Endothelial cell of umbilical vein (primary cell): ENCODE measurements at regions of chr4 and their contacts with region 1.

Region 1: GRCh38 chr4:177108708-177109107 is 201.0 kb upstream of the NEIL3 start:
- DNase-seq: no peak
- H3K4me3 ChIP-seq: no peak overlapping the region
- H3K27ac ChIP-seq: no peak overlapping the region
- H3K4me1 ChIP-seq: no peaks in the 10 kb centered on the region
- H3K27me3 ChIP-seq: no peaks in the 10 kb centered on the region
- CTCF ChIP-seq: no peak
- POLR2A ChIP-seq: no peak

Region 2: GRCh38 chr4:176964116-176964691 is 144.5 kb before region 1 on chr4:
- CTCF ChIA-PET with region 1: no interaction called
- POLR2A ChIA-PET with region 1: no interaction called
- dilution Hi-C with region 1: no loop called
- intact Hi-C with region 1: no loop called
- DNase-seq: no peak
- H3K4me3 ChIP-seq: no peak overlapping the region
- H3K27ac ChIP-seq: no peak overlapping the region
- H3K4me1 ChIP-seq: no peaks in the 10 kb centered on the region
- H3K27me3 ChIP-seq: no peaks in the 10 kb centered on the region
- CTCF ChIP-seq: peak; percentile 12 to 16
- POLR2A ChIP-seq: no peak

Region 3: DNA sequence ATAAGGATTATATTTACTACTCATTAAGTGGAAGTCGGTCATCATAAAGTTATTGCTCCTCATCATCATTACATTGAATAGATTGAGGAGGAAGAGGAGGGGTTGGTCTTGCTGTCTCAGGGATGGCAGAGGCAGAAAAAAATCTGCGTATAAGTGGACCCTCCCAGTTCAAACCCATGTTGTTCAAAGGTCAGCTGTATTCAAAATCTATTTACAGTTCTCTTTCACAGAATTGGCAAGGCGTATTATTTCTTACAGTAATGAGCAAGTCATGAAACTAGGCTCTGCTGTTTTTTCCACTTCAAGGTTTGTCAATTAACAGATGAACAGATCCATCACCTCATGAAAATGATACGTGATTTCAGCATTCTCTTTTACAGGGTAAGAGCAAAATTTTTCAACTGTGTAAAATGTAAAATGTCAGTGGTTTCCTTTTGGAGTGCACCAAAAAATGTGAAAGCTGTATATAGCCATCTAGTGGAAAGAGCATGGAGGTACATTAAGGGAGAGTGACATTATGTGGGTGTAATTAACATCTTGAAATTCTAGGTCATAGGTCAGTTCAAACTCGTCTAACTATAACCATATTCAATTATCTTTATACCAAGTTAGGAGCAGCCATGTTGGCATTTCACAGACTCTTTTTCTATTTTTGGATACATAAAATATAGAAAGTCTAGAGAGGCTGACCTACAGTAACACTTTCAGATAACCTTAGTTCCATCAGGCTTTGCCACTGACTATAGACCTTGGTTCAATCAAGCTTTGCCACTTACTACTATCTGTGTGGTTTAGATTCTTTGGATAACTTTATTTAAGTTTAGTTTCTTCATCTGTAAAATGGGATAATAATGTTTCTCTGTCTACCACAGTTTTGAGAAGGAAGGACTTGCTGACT is 231.0 kb after region 1 on chr4:
- CTCF ChIA-PET with region 1: interaction called, 6 read pairs
- POLR2A ChIA-PET with region 1: no interaction called
- dilution Hi-C with region 1: no loop called
- intact Hi-C with region 1: loop called (anchors 1 kb)
- DNase-seq: peak; percentile 57
- H3K4me3 ChIP-seq: no peak overlapping the region
- H3K27ac ChIP-seq: no peak overlapping the region
- H3K4me1 ChIP-seq: no peaks in the 10 kb centered on the region
- H3K27me3 ChIP-seq: no peaks in the 10 kb centered on the region
- CTCF ChIP-seq: peak; percentile 38 to 51
- POLR2A ChIP-seq: no peak